ENCODE measurements at regions of chr12 and their contacts with region 1.

Region 1: GRCh38 chr12:52050761-52051541 is at the start of gene NR4A1:
- DNase-seq: peak; percentile 97 to 99
- H3K4me3 ChIP-seq: peak within 1 kb of the TSS; percentile 60
- H3K4me3 Mint-ChIP-seq: peak within 1 kb of the TSS; percentile 84
- H3K27ac Mint-ChIP-seq: peak within 1 kb of the TSS; percentile 68
- H3K4me1 ChIP-seq: peaks cover 23% of the 10 kb centered on the region
- H3K4me1 Mint-ChIP-seq: peaks cover 22% of the 10 kb centered on the region
- H3K27me3 ChIP-seq: no peaks in the 10 kb centered on the region
- H3K27me3 Mint-ChIP-seq: no peaks in the 10 kb centered on the region
- CTCF ChIP-seq: peak in 1 of 2 experiments; percentile 46
- total RNA-seq, gene NR4A1: 37.9 and 41.8 TPM in 2 replicates

Region 2: GRCh38 chr12:51847643-51848325 is 203.2 kb before region 1 on chr12:
- CTCF ChIA-PET with region 1: interaction called, 15 read pairs
- POLR2A ChIA-PET with region 1: no interaction called
- intact Hi-C with region 1: no loop called
- DNase-seq: peak; percentile 57 to 65
- H3K4me3 ChIP-seq: peak overlapping the region; percentile 83
- H3K4me3 Mint-ChIP-seq: peak overlapping the region; percentile 84
- H3K27ac Mint-ChIP-seq: peak overlapping the region; percentile 46
- H3K4me1 ChIP-seq: peaks cover 27% of the 10 kb centered on the region
- H3K4me1 Mint-ChIP-seq: peaks cover 17% of the 10 kb centered on the region
- H3K27me3 ChIP-seq: no peaks in the 10 kb centered on the region
- H3K27me3 Mint-ChIP-seq: no peaks in the 10 kb centered on the region
- CTCF ChIP-seq: no peak

Region 3: DNA sequence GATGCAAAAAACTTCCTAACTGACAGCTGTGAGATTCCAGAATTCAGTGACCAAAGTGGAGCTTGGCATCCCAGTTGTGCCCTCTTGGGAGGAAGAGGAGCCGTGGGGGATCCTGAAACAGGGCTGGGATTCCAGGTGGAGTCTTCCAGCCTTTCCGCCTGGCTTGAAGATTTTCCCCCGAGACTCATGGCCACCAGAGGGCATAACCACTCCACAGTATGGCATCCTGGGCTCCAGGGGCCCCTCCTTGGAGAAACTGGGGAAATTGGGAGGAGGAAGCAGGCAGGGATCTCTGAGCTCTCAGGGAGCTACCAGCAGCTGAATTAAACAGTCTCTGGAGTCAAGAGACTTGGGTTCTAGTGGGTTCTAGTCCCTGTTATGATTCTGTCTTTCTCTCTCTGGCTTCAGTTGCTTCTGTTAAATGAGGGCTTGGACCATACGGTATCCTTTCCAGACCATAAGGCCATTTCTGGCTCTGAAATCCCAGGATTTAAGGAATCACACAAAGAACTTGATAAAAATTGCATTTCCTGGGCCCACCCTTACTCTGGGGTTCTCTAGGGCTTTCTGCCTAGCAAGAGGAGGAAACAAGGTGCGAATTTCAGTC is 46.8 kb before region 1 on chr12:
- CTCF ChIA-PET with region 1: interaction called, 13 read pairs
- POLR2A ChIA-PET with region 1: interaction called, 4 read pairs
- intact Hi-C with region 1: no loop called
- DNase-seq: peak; percentile 70 to 78
- H3K4me3 ChIP-seq: no peak overlapping the region
- H3K4me3 Mint-ChIP-seq: no peak overlapping the region
- H3K27ac Mint-ChIP-seq: no peak overlapping the region
- H3K4me1 ChIP-seq: no peaks in the 10 kb centered on the region
- H3K4me1 Mint-ChIP-seq: no peaks in the 10 kb centered on the region
- H3K27me3 ChIP-seq: no peaks in the 10 kb centered on the region
- H3K27me3 Mint-ChIP-seq: no peaks in the 10 kb centered on the region
- CTCF ChIP-seq: peak; percentile 86 to 87

Region 4: DNA sequence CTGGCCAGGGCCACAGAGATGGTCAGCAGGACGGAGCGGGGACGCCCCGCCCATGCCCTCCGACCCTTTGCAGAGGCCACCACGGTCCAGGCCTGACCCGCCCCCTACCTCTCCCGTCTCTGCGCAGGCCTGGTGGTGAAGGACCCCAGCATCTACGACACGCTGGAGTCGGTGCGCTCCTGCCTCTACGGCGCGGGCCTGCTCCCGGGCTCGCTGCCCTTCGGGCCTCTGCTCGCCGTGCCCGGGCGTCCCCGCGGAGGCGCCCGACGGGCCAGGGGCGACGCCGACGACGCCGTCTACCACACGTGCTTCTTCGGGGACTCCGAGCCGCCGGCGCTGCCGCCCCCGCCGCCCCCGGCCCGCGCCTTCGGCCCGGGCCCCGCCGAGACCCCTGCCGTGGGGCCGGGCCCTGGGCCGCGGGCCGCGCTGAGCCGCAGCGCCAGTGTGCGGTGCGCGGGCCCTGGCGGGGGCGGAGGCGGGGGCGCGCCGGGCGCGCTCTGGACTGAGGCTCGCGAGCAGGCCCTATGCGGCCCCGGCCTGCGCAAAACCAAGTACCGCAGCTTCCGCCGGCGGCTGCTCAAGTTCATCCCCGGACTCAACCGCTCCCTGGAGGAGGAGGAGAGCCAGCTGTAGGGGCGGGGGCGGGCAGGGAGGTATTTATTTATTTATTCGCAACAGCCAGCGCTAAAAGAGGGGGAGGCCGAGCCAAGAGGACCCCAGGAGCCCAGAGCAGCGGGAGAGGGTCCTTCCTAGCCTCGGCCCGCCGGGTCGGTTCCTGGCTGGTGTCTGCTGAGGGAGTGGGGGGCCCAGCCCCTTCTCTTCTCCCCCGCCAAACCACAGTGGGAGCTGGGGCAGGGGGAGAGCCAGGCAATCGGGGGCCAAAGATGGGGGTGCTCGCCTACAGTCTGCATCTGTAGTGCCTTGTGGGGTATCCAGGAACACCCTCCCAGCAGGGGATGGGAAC is 36.1 kb before region 1 on chr12:
- CTCF ChIA-PET with region 1: no interaction called
- POLR2A ChIA-PET with region 1: no interaction called
- intact Hi-C with region 1: no loop called
- DNase-seq: no peak
- H3K4me3 ChIP-seq: no peak overlapping the region
- H3K4me3 Mint-ChIP-seq: no peak overlapping the region
- H3K27ac Mint-ChIP-seq: no peak overlapping the region
- H3K4me1 ChIP-seq: no peaks in the 10 kb centered on the region; the same call in 1 of the 2 replicates
- H3K4me1 Mint-ChIP-seq: peaks cover 12% of the 10 kb centered on the region
- H3K27me3 ChIP-seq: no peaks in the 10 kb centered on the region
- H3K27me3 Mint-ChIP-seq: no peaks in the 10 kb centered on the region
- CTCF ChIP-seq: no peak

Region 5: GRCh38 chr12:52032804-52033502 is 18.0 kb before region 1 on chr12:
- CTCF ChIA-PET with region 1: interaction called, 18 read pairs
- POLR2A ChIA-PET with region 1: interaction called, 88 read pairs
- intact Hi-C with region 1: loop called (anchors 1 kb)
- DNase-seq: peak; percentile 98
- H3K4me3 ChIP-seq: peak overlapping the region; percentile 33
- H3K4me3 Mint-ChIP-seq: peak overlapping the region; percentile 85
- H3K27ac Mint-ChIP-seq: peak overlapping the region; percentile 92
- H3K4me1 ChIP-seq: peaks cover 20% of the 10 kb centered on the region
- H3K4me1 Mint-ChIP-seq: peaks cover 19% of the 10 kb centered on the region
- H3K27me3 ChIP-seq: no peaks in the 10 kb centered on the region
- H3K27me3 Mint-ChIP-seq: no peaks in the 10 kb centered on the region
- CTCF ChIP-seq: no peak

Region 6: GRCh38 chr12:52038447-52038846 is 12.5 kb before region 1 on chr12:
- CTCF ChIA-PET with region 1: interaction called, 5 read pairs
- POLR2A ChIA-PET with region 1: interaction called, 88 read pairs
- intact Hi-C with region 1: loop called (anchors 1 kb)
- DNase-seq: no peak
- H3K4me3 ChIP-seq: no peak overlapping the region
- H3K4me3 Mint-ChIP-seq: peak overlapping the region; percentile 94
- H3K27ac Mint-ChIP-seq: peak overlapping the region; percentile 98
- H3K4me1 ChIP-seq: peaks cover 26% of the 10 kb centered on the region
- H3K4me1 Mint-ChIP-seq: peaks cover 22% of the 10 kb centered on the region
- H3K27me3 ChIP-seq: no peaks in the 10 kb centered on the region
- H3K27me3 Mint-ChIP-seq: no peaks in the 10 kb centered on the region
- CTCF ChIP-seq: no peak

Region 7: DNA sequence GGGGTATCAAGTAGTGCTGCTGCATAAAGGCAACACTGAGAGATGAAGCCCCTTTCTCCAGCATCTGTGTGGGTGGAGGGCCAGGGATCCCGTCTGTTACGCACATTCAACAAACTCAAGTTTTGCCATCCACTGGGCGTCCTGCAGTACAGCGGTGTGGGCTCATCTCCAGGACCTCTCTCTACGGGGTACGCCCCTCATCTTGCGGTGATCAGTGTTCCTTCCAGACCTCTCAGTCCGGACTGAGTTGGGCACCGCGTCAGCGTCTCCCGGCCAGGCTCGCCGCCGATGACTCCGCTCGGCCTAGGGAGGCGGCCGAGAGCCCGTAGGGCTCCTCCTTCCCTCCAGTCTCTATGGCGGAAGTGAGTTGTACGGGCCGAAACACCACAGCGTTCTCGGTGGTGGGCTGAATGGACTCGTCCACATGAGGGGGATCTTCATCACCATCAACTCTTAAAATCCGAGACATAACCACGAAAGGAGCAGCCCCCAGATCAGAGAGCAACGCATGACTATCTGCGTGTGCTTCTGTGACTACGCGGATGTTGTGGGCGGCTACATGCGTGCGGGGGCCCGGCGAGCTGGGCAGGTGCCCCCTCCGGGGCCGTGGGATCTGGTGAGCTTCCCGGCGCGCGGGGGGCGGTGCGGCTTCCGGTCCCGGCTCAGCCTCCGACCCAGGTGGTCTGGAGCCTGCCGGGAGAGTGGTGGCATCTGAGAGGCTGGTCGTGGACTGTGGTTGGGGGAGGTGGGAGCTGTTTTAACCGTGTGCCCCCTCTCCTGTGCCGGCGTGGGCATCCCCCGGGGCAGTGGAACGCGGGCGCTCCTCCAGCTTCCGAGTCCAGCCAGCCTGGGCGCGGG is 18.6 kb after region 1 on chr12 and contains the start of gene ATG101:
- CTCF ChIA-PET with region 1: interaction called, 15 read pairs
- POLR2A ChIA-PET with region 1: interaction called, 33 read pairs
- intact Hi-C with region 1: loop called (anchors 1 kb)
- DNase-seq: peak; percentile 96
- H3K4me3 ChIP-seq: peak within 1 kb of the TSS; percentile 80
- H3K4me3 Mint-ChIP-seq: peak within 1 kb of the TSS; percentile 85
- H3K27ac Mint-ChIP-seq: peak within 1 kb of the TSS; percentile 100
- H3K4me1 ChIP-seq: peaks cover 12% of the 10 kb centered on the region
- H3K4me1 Mint-ChIP-seq: peaks cover 30% of the 10 kb centered on the region
- H3K27me3 ChIP-seq: no peaks in the 10 kb centered on the region
- H3K27me3 Mint-ChIP-seq: no peaks in the 10 kb centered on the region
- CTCF ChIP-seq: peak; percentile 47 to 97
- total RNA-seq, gene ATG101: 67.2 and 78.0 TPM in 2 replicates

Region 8: GRCh38 chr12:52082988-52083637 is 32.2 kb after region 1 on chr12:
- CTCF ChIA-PET with region 1: interaction called, 5 read pairs
- POLR2A ChIA-PET with region 1: no interaction called
- intact Hi-C with region 1: loop called (anchors 1 kb)
- DNase-seq: peak; percentile 68 to 82
- H3K4me3 ChIP-seq: no peak overlapping the region
- H3K4me3 Mint-ChIP-seq: no peak overlapping the region
- H3K27ac Mint-ChIP-seq: no peak overlapping the region
- H3K4me1 ChIP-seq: no peaks in the 10 kb centered on the region
- H3K4me1 Mint-ChIP-seq: peaks cover 7% of the 10 kb centered on the region
- H3K27me3 ChIP-seq: no peaks in the 10 kb centered on the region
- H3K27me3 Mint-ChIP-seq: no peaks in the 10 kb centered on the region
- CTCF ChIP-seq: peak; percentile 98

Measured in Caco-2 (cell line).